Activated CD4-positive, alpha-beta T cell treated with anti-CD3 and anti-CD28 coated beads for 36 hours (primary cell): ENCODE measurements at regions of chr20 and their contacts with region 1.

Region 1: DNA sequence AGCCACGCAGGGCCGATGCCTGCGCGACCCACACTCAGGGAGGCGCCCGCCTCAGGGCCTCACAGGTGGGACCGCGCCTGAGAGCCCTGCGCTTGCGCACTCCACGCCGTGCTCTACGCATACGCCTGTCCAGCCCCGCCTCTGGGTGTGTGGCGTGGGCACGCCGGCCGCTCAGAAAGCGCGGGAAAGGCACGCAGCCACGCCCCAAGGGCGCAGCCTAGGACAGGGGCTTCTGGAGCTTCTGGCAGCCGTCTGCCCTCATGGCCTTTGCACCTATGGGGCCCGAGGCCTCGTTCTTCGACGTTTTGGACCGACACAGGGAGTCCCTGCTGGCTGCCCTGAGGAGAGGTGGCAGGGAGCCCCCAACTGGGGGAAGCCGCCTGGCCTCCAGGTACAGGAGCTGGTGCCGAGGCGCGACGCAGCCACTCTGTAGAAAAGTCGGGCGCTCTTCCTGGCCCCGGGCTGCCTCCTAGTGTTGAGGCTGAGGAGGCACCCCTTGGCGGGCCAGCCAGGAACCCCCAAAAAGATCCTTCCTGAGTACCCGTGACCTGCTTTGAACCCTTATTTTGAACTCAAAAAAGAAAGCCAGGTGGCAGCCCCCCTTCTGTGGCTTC is at the start of gene SPO11:
- DNase-seq: peak; percentile 38
- ATAC-seq: no peak
- H3K4me3 Mint-ChIP-seq: no peak within 1 kb of the TSS
- H3K27ac Mint-ChIP-seq: no peak within 1 kb of the TSS
- H3K4me1 Mint-ChIP-seq: no peaks in the 10 kb centered on the region
- H3K27me3 Mint-ChIP-seq: peaks cover 25% of the 10 kb centered on the region
- total RNA-seq, gene SPO11: not detected

Region 2: DNA sequence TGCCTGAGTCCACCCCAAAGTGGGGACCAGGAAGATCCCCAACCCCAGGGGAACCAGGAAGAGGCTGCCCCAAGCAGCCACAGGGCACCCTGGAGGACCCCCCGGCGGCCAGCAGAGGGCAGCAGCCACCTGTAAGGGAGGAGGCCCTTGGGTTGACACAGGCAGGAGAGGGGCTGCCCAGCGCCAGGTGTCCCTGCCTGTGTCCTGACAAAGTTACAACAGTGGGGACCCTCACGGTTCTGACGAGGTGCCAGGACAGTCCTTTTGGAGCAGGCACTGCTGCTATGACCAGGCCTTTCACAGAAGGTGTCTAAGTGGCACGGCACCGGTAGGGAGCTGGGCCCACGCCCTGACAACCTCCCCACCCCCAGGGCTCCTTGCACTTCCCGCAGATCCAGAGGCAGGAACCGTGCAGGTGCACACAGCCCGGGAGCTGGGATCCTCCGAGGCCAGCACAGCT is 240.0 kb before region 1 on chr20:
- CTCF ChIA-PET with region 1: interaction called, 9 read pairs
- POLR2A ChIA-PET with region 1: no interaction called
- intact Hi-C with region 1: loop called in 1 of 2 experiments (anchors 5 kb)
- DNase-seq: peak; percentile 87
- ATAC-seq: peak; percentile 80
- H3K4me3 Mint-ChIP-seq: no peak overlapping the region
- H3K27ac Mint-ChIP-seq: no peak overlapping the region
- H3K4me1 Mint-ChIP-seq: peaks cover 15% of the 10 kb centered on the region
- H3K27me3 Mint-ChIP-seq: peaks cover 9% of the 10 kb centered on the region

Region 3: DNA sequence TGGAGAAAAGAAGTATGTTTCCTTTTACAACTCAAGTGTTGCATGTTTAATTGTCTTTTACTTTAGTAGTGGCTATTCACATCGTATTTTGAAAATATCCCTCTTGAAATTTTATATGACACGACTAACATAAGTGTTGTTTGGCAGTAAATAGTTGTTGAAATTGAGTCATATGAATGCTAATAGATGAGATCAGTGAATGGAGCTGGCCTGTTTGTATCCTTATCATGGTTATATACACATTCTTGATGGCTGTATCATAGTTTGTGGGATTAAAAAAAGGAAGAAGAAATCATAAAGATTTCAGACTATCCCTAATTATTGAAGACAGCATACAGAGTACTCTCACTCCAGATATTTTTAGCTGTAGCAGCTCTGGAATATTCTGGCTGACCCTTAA is 13.1 kb after region 1 on chr20:
- CTCF ChIA-PET with region 1: interaction called, 31 read pairs
- POLR2A ChIA-PET with region 1: no interaction called
- intact Hi-C with region 1: no loop called
- DNase-seq: no peak
- ATAC-seq: no peak
- H3K4me3 Mint-ChIP-seq: no peak overlapping the region
- H3K27ac Mint-ChIP-seq: no peak overlapping the region
- H3K4me1 Mint-ChIP-seq: no peaks in the 10 kb centered on the region
- H3K27me3 Mint-ChIP-seq: peaks cover 6% of the 10 kb centered on the region

Region 4: DNA sequence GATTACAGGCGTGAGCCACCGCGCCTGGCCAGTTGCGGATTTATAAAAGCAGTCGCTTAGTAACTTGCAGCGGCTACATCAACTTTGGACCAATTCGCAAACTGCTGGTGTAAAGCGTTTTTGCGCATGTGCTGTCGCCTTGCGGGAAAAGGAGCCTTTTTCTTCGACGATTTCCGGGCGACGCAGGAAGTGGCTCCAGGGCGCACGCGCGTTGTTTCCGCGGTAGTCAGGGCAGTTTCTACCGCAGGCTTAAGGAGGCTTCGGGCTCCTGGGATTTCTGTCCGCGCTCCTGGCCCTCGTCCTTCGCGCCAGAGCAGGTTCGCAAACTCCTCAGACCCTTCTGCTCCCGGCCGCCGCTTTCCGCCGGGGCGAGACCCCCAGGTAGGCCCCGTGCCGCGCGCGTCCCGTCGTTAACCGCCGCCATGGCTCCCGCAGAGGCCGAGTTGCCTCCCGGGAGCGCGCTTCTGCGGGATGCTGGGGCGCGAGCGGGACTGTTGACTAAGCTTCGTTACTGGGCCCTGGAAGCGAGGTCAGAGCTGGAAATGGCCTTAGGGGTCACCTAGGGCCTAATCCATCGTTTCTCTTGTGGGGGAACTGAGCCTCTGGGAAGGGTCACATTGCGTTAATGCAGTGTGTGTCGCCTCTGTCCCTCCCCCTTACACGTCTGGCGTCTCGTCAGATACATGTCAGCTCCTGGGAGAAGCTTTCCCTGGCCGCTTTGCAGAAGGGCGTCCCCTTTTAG is 21.5 kb after region 1 on chr20 and contains the start of gene RAE1:
- CTCF ChIA-PET with region 1: interaction called, 31 read pairs
- POLR2A ChIA-PET with region 1: no interaction called
- intact Hi-C with region 1: no loop called
- DNase-seq: peak; percentile 94
- ATAC-seq: peak; percentile 84
- H3K4me3 Mint-ChIP-seq: peak within 1 kb of the TSS; percentile 96
- H3K27ac Mint-ChIP-seq: peak within 1 kb of the TSS; percentile 89
- H3K4me1 Mint-ChIP-seq: peaks cover 37% of the 10 kb centered on the region
- H3K27me3 Mint-ChIP-seq: no peaks in the 10 kb centered on the region
- total RNA-seq, gene RAE1: 42.7 to 48.9 TPM